Endothelial cell of umbilical vein (primary cell): ENCODE measurements at regions of chr4 and their contacts with region 1.

Region 1: DNA sequence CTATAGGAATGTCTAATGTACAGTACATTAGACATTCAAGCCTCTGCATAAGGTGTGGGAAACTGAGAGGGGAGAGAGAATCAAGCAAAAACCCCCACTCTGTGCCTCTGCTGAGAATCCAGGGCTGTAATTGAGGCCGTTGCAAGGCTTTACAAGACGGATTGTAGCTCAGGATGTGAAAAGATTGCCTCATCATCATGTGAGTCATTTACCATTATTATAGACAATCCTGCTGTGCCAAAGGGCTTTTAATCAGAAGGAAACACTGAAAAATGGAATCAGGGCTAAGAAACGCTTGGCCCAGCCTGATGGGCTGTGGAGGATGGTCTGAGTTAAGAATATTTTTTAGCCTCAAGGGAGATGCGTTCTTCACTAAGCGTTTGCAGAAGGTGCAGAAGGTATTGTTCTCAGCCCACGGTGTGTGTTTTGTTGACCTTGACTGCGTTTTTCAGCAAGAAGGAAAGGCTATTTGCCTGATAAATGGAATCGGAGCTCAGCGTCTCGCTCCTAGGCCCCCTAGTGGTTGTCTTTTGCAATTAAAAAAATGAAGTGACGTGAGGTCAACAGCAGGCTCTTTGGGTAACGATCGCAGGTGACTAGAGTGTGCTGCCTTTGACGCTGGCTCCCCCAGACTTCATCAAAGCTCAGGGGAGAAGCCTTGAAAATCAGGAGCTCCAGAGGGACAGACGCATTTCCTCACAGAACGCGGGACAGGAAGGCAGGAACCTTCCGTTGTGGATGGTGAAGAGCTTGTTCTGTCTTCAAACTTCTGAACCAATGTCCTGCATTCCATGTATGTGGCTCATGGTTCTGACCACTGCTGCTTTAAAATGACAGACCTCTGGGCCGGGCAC is 18.1 kb upstream of the CHRNA9 start:
- DNase-seq: peak; percentile 95
- H3K4me3 ChIP-seq: peak overlapping the region in 2 of 3 experiments; percentile 7 to 49
- H3K27ac ChIP-seq: peak overlapping the region; percentile 95
- H3K4me1 ChIP-seq: peaks cover 15% of the 10 kb centered on the region
- H3K27me3 ChIP-seq: no peaks in the 10 kb centered on the region
- CTCF ChIP-seq: peak; percentile 76 to 83
- POLR2A ChIP-seq: no peak

Region 2: GRCh38 chr4:39527273-39528060 is 789.5 kb before region 1 on chr4 and contains the start of gene UGDH:
- CTCF ChIA-PET with region 1: no interaction called
- POLR2A ChIA-PET with region 1: interaction called, 3 read pairs
- dilution Hi-C with region 1: no loop called
- intact Hi-C with region 1: loop called (anchors 2 kb)
- DNase-seq: peak; percentile 98
- H3K4me3 ChIP-seq: peak within 1 kb of the TSS; percentile 50 to 92 (median 60)
- H3K27ac ChIP-seq: peak within 1 kb of the TSS; percentile 90
- H3K4me1 ChIP-seq: peaks cover 12% of the 10 kb centered on the region
- H3K27me3 ChIP-seq: no peaks in the 10 kb centered on the region
- CTCF ChIP-seq: no peak
- POLR2A ChIP-seq: peak; percentile 97
- total RNA-seq, gene UGDH: 62.1 and 69.7 TPM in 2 replicates

Region 3: GRCh38 chr4:39977489-39978377 is 339.3 kb before region 1 on chr4 and contains the start of gene PDS5A:
- CTCF ChIA-PET with region 1: no interaction called
- POLR2A ChIA-PET with region 1: no interaction called
- dilution Hi-C with region 1: no loop called
- intact Hi-C with region 1: loop called (anchors 2 kb)
- DNase-seq: peak; percentile 88
- H3K4me3 ChIP-seq: peak within 1 kb of the TSS; percentile 62 to 83 (median 67)
- H3K27ac ChIP-seq: peak within 1 kb of the TSS; percentile 74
- H3K4me1 ChIP-seq: peaks cover 15% of the 10 kb centered on the region
- H3K27me3 ChIP-seq: no peaks in the 10 kb centered on the region
- CTCF ChIP-seq: peak; percentile 77 to 95
- POLR2A ChIP-seq: peak; percentile 78
- total RNA-seq, gene PDS5A: 77.8 and 80.8 TPM in 2 replicates

Region 4: GRCh38 chr4:40130401-40131036 is 186.5 kb before region 1 on chr4:
- CTCF ChIA-PET with region 1: interaction called, 11 read pairs
- POLR2A ChIA-PET with region 1: no interaction called
- dilution Hi-C with region 1: no loop called
- intact Hi-C with region 1: no loop called
- DNase-seq: no peak
- H3K4me3 ChIP-seq: no peak overlapping the region
- H3K27ac ChIP-seq: no peak overlapping the region
- H3K4me1 ChIP-seq: no peaks in the 10 kb centered on the region
- H3K27me3 ChIP-seq: no peaks in the 10 kb centered on the region
- CTCF ChIP-seq: no peak
- POLR2A ChIP-seq: no peak

Region 5: GRCh38 chr4:40180356-40180755 is 136.7 kb before region 1 on chr4:
- CTCF ChIA-PET with region 1: interaction called, 6 read pairs
- POLR2A ChIA-PET with region 1: no interaction called
- dilution Hi-C with region 1: no loop called
- intact Hi-C with region 1: loop called (anchors 1 kb)
- DNase-seq: peak; percentile 85
- H3K4me3 ChIP-seq: no peak overlapping the region
- H3K27ac ChIP-seq: peak overlapping the region; percentile 70
- H3K4me1 ChIP-seq: peaks cover 11% of the 10 kb centered on the region
- H3K27me3 ChIP-seq: no peaks in the 10 kb centered on the region
- CTCF ChIP-seq: no peak
- POLR2A ChIP-seq: no peak

Region 6: GRCh38 chr4:40333921-40334352 is 16.9 kb after region 1 on chr4:
- CTCF ChIA-PET with region 1: interaction called, 135 read pairs
- POLR2A ChIA-PET with region 1: no interaction called
- dilution Hi-C with region 1: no loop called
- intact Hi-C with region 1: no loop called
- DNase-seq: no peak
- H3K4me3 ChIP-seq: no peak overlapping the region
- H3K27ac ChIP-seq: no peak overlapping the region
- H3K4me1 ChIP-seq: no peaks in the 10 kb centered on the region
- H3K27me3 ChIP-seq: peaks cover 3 to 8% of the 10 kb centered on the region in 2 experiments
- CTCF ChIP-seq: no peak
- POLR2A ChIP-seq: no peak